GM18951 (cell line): ENCODE measurements at regions of chr14 and their contacts with region 1.

Region 1: GRCh38 chr14:75307700-75308379 is 29.2 kb downstream of the FOS start:
- POLR2A ChIP-seq: no peak

Region 2: DNA sequence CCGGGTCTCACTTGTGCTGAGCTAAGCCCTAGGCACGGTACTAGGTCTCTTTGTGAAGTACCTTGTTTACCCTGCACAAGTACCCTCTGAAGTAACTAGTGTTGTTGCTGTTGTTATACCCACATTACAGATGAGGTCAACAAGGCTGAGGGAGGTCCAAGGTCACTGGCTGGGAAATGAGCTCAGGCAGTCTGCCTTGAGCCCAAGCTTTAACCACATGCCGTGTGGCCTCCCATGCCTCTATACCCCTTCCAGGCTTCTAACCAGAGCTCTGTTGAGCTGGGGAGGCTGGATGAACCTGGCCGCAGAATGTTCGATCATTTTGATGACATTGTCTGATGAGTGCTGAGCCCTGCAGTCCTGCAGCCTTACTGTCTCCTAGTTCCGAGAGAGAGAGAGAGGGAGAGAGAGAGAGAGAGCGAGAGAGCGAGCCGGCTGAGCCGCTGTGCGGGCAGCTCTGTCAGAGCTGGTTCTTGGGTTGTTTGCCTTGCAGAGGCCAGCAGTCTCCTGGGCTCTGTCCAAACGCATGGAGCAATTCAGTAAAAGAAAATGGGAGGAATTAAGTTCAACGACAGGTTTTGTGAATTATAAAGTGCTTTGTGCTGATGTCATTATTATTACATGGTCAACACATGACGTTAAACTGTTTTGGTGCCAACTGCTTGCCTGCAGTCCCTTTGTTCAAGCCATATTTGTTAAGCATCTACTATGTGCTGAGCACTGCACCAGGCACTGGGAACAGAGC is 133.1 kb after region 1 on chr14:
- in situ Hi-C with region 1: loop called (anchors 10 kb)
- POLR2A ChIP-seq: no peak

Region 3: GRCh38 chr14:75469606-75470237 is 161.9 kb after region 1 on chr14:
- in situ Hi-C with region 1: loop called (anchors 5 kb)
- POLR2A ChIP-seq: no peak

Region 4: DNA sequence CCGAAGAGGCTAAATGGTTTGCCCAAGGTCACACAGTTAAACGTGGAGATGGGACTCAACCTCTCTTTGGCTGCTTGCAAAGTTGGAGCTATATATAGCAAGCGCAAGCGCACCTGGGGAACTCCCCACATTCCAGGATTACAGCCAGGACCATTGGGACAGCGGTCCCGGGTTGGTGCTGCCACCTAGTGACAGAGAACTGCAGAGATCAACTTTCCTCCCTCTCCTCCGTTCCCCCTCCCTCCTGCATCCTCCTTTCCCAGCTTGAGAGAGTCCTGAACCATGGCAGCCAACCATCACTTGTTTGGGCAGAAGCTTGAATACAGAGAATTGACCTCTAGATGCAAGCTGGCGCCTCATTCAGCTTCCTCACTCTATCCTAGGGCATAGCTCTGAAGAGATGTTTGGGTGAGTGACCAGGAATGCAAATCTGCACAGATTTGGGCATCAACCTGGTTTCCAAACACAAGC is 253.2 kb after region 1 on chr14:
- in situ Hi-C with region 1: loop called (anchors 5 kb)
- POLR2A ChIP-seq: no peak